HepG2 (cell line): ENCODE measurements at regions of chr2 and their contacts with region 1.

Region 1: GRCh38 chr2:215680605-215681598 is 245.0 kb upstream of the FN1 start:
- DNase-seq: peak; percentile 100
- ATAC-seq: peak; percentile 97
- H3K4me3 ChIP-seq: 0 out of 6 replicates have a peak overlapping the region, but pooled peaks of 1 of the 3 experiments have one; percentile 11
- H3K27ac ChIP-seq: peak overlapping the region; percentile 89
- H3K4me1 ChIP-seq: peaks cover 87% of the 10 kb centered on the region
- H3K27me3 ChIP-seq: no peaks in the 10 kb centered on the region
- CTCF ChIP-seq: no peak
- EP300 ChIP-seq: peak; percentile 98 to 100
- POLR2A ChIP-seq: no peak
- RAD21 ChIP-seq: no peak; the same call in none of the 2 replicates

Region 2: GRCh38 chr2:215435809-215436704 is 244.8 kb before region 1 on chr2 and contains the start of gene FN1:
- CTCF ChIA-PET with region 1: no interaction called
- POLR2A ChIA-PET with region 1: interaction called, 3 read pairs
- in situ Hi-C with region 1: no loop called
- intact Hi-C with region 1: loop called (anchors 1 kb)
- DNase-seq: peak; percentile 91
- ATAC-seq: peak; percentile 92
- H3K4me3 ChIP-seq: peak within 1 kb of the TSS; percentile 86 to 99 (median 95)
- H3K27ac ChIP-seq: peak within 1 kb of the TSS; percentile 71
- H3K4me1 ChIP-seq: peaks cover 71% of the 10 kb centered on the region
- H3K27me3 ChIP-seq: no peaks in the 10 kb centered on the region; a peak in 1 of 5 replicates
- CTCF ChIP-seq: no peak
- EP300 ChIP-seq: peak in 1 of 2 experiments; percentile 27; a peak in 1 of 4 replicates
- POLR2A ChIP-seq: peak; percentile 97 to 99
- RAD21 ChIP-seq: no peak; the same call in 1 of the 2 replicates
- total RNA-seq, gene FN1: 1,029 and 1,847 TPM in 2 replicates

Region 3: DNA sequence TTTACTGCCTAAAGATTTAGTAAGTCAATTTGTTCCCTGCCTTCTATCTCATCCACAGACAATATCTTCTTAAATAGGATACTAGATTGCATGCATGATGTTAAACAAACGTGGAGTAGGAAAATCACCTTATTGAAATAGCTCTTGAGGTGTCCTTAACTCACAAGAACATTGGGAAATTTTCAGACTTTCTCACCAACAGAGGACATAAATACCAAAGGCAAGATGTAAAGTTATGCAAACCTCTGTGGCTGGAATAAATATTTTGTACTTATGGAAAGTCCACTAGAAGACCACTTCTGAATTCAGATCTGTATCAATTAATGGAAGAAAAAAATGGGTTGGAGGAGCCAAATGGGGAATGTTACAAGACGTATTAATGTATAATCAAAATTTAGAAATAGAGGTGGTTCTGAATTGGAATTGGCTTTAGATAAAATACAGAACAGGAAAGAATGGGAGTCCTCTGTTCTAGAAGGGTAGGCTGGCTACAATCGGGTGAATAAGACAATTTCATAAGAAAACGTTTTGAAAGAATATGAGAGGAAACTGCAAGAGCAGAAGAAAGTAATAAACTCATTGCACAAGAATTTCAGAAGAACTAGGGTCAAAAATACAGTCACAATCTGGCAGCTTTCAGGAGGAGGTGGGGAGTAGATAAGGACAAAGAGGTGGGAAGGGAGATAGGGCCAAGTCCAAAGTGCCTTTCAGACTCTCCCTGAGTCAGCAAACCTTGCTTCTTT is 175.7 kb before region 1 on chr2:
- CTCF ChIA-PET with region 1: no interaction called
- POLR2A ChIA-PET with region 1: no interaction called
- in situ Hi-C with region 1: no loop called
- intact Hi-C with region 1: loop called (anchors 1 kb)
- DNase-seq: peak; percentile 90
- ATAC-seq: peak; percentile 91
- H3K4me3 ChIP-seq: no peak overlapping the region
- H3K27ac ChIP-seq: peak overlapping the region; percentile 67
- H3K4me1 ChIP-seq: peaks cover 46% of the 10 kb centered on the region
- H3K27me3 ChIP-seq: no peaks in the 10 kb centered on the region
- CTCF ChIP-seq: no peak
- EP300 ChIP-seq: peak; percentile 47 to 92; a peak in 3 of 4 replicates
- POLR2A ChIP-seq: no peak
- RAD21 ChIP-seq: no peak

Region 4: DNA sequence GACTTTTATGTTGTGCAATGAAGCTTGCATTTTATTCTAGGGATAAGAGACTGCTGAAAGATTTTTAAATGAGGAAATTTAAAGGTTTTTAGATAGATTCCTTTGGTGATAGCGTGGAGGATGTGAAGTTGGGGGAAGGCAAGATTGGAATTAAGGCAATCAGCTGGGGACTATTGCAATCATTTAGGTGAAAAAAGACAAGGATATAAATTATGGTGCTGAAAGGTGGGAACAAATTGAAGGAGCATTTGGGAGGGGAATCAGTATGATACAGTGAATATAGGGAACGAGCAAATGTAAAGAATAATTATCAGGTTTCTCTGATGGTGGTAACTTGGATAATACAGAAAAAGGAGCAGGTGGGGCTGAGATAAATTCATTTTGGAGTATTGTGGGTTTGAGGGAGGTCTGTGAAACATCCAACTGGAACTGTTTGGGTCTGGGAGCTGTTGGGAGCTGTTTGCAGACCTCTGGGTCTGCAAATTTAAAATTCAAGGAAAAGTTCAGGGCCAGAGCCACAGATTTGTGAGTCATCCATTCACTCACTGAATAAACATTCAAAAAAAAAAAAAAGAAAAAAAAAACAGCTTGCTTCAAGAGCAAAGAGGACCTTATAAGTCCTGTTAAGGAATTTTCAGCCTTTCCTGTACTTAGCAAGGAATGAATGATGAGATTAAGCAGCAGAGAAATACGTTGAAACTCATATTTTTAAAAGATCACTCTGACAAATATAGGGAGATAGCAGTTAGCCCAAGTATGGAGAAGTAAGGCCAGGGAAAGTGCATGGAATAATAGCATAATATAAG is 12.5 kb after region 1 on chr2:
- CTCF ChIA-PET with region 1: no interaction called
- POLR2A ChIA-PET with region 1: interaction called, 62 read pairs
- in situ Hi-C with region 1: no loop called
- intact Hi-C with region 1: loop called (anchors 1 kb)
- DNase-seq: peak; percentile 93
- ATAC-seq: peak; percentile 92
- H3K4me3 ChIP-seq: peak overlapping the region in 1 of 3 experiments; percentile 13; a peak in 1 of 6 replicates
- H3K27ac ChIP-seq: peak overlapping the region; percentile 80
- H3K4me1 ChIP-seq: peaks cover 47% of the 10 kb centered on the region
- H3K27me3 ChIP-seq: no peaks in the 10 kb centered on the region
- CTCF ChIP-seq: no peak
- EP300 ChIP-seq: peak in 1 of 2 experiments; percentile 96; a peak in 2 of 4 replicates
- POLR2A ChIP-seq: peak in 1 of 2 experiments; percentile 47; a peak in 1 of 4 replicates
- RAD21 ChIP-seq: no peak

Region 5: GRCh38 chr2:215787025-215787424 is 106.1 kb after region 1 on chr2:
- CTCF ChIA-PET with region 1: no interaction called
- POLR2A ChIA-PET with region 1: interaction called, 22 read pairs
- in situ Hi-C with region 1: loop called (anchors 5 kb)
- intact Hi-C with region 1: no loop called
- DNase-seq: no peak
- ATAC-seq: no peak
- H3K4me3 ChIP-seq: no peak overlapping the region
- H3K27ac ChIP-seq: peak overlapping the region; percentile 14
- H3K4me1 ChIP-seq: peaks cover 71% of the 10 kb centered on the region
- H3K27me3 ChIP-seq: no peaks in the 10 kb centered on the region
- CTCF ChIP-seq: no peak
- EP300 ChIP-seq: no peak
- POLR2A ChIP-seq: no peak
- RAD21 ChIP-seq: no peak